Naive thymus-derived CD4-positive, alpha-beta T cell (primary cell): ENCODE measurements at regions of chr6 and their contacts with region 1.

Region 1: DNA sequence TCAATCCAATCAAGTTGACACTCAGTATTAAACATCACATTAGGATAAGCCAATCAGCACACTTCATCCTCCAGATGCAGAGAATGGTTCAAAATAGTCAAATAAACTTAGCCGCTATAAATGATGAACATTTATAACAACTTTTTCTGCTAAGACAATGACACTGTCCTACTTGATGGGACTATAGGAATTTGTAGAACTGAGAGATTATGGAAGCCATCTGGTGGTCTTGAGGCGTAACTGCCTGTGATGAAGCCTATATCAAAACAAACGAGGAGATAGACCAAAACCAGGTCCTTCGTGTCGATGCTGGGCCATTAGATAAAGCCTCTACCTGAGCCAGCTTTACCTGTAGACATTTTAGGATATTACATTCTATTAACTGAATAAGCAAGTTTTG is 631.1 kb downstream of the COL12A1 start:
- DNase-seq: no peak
- ATAC-seq: no peak
- H3K4me3 ChIP-seq: no peak overlapping the region
- H3K4me3 Mint-ChIP-seq: no peak overlapping the region
- H3K27ac ChIP-seq: no peak overlapping the region
- H3K27ac Mint-ChIP-seq: no peak overlapping the region
- H3K4me1 ChIP-seq: no peaks in the 10 kb centered on the region
- H3K4me1 Mint-ChIP-seq: peaks cover 0 to 3% (median 0%) of the 10 kb centered on the region in 7 donors
- H3K27me3 ChIP-seq: no peaks in the 10 kb centered on the region
- H3K27me3 Mint-ChIP-seq: peaks cover 0 to 4% (median 2%) of the 10 kb centered on the region in 5 donors

Region 2: GRCh38 chr6:73739096-73739495 is 835.7 kb before region 1 on chr6:
- CTCF ChIA-PET with region 1: no interaction called
- POLR2A ChIA-PET with region 1: no interaction called
- intact Hi-C with region 1: loop called in 1 of 2 experiments (anchors 1 kb)
- DNase-seq: peak in 7 of 9 donors; percentile 31 to 69 (median 57)
- ATAC-seq: peak; percentile 76
- H3K4me3 ChIP-seq: no peak overlapping the region
- H3K4me3 Mint-ChIP-seq: no peak overlapping the region
- H3K27ac ChIP-seq: no peak overlapping the region
- H3K27ac Mint-ChIP-seq: no peak overlapping the region
- H3K4me1 ChIP-seq: no peaks in the 10 kb centered on the region
- H3K4me1 Mint-ChIP-seq: peaks cover 0 to 4% (median 0%) of the 10 kb centered on the region in 7 donors
- H3K27me3 ChIP-seq: no peaks in the 10 kb centered on the region
- H3K27me3 Mint-ChIP-seq: peaks cover 0 to 4% (median 0%) of the 10 kb centered on the region in 5 donors

Region 3: GRCh38 chr6:73854998-73855718 is 719.6 kb before region 1 on chr6:
- CTCF ChIA-PET with region 1: no interaction called
- POLR2A ChIA-PET with region 1: no interaction called
- intact Hi-C with region 1: loop called in 1 of 2 experiments (anchors 5 kb)
- DNase-seq: peak in 6 of 9 donors; percentile 2 to 43 (median 26)
- ATAC-seq: peak; percentile 66
- H3K4me3 ChIP-seq: no peak overlapping the region
- H3K4me3 Mint-ChIP-seq: no peak overlapping the region
- H3K27ac ChIP-seq: no peak overlapping the region
- H3K27ac Mint-ChIP-seq: no peak overlapping the region
- H3K4me1 ChIP-seq: no peaks in the 10 kb centered on the region
- H3K4me1 Mint-ChIP-seq: peaks cover 0 to 2% (median 0%) of the 10 kb centered on the region in 7 donors
- H3K27me3 ChIP-seq: no peaks in the 10 kb centered on the region
- H3K27me3 Mint-ChIP-seq: peaks cover 0 to under 1% (median 0%) of the 10 kb centered on the region in 5 donors

Region 4: GRCh38 chr6:74480561-74480960 is 94.2 kb before region 1 on chr6:
- CTCF ChIA-PET with region 1: no interaction called
- POLR2A ChIA-PET with region 1: no interaction called
- intact Hi-C with region 1: no loop called
- DNase-seq: no peak
- ATAC-seq: no peak
- H3K4me3 ChIP-seq: no peak overlapping the region
- H3K4me3 Mint-ChIP-seq: no peak overlapping the region
- H3K27ac ChIP-seq: no peak overlapping the region
- H3K27ac Mint-ChIP-seq: no peak overlapping the region
- H3K4me1 ChIP-seq: no peaks in the 10 kb centered on the region
- H3K4me1 Mint-ChIP-seq: no peaks in the 10 kb centered on the region
- H3K27me3 ChIP-seq: no peaks in the 10 kb centered on the region
- H3K27me3 Mint-ChIP-seq: no peaks in the 10 kb centered on the region